ENCODE measurements at regions of chr7 and their contacts with region 1.

Region 1: GRCh38 chr7:12979181-12979580 is 291.7 kb downstream of the ARL4A start:
- DNase-seq: no peak
- ATAC-seq: no peak
- H3K4me3 ChIP-seq: no peak overlapping the region
- H3K27ac ChIP-seq: no peak overlapping the region
- H3K4me1 ChIP-seq: no peaks in the 10 kb centered on the region
- H3K27me3 ChIP-seq: no peaks in the 10 kb centered on the region
- CTCF ChIP-seq: no peak
- EP300 ChIP-seq: no peak
- POLR2A ChIP-seq: no peak
- RAD21 ChIP-seq: no peak

Region 2: GRCh38 chr7:12961910-12962480 is 17.2 kb before region 1 on chr7:
- CTCF ChIA-PET with region 1: no interaction called
- POLR2A ChIA-PET with region 1: no interaction called
- RAD21 ChIA-PET with region 1: no interaction called
- SMC1A ChIA-PET with region 1: no interaction called
- in situ Hi-C with region 1: no loop called
- intact Hi-C with region 1: no loop called
- DNase-seq: no peak
- ATAC-seq: no peak
- H3K4me3 ChIP-seq: no peak overlapping the region
- H3K27ac ChIP-seq: no peak overlapping the region
- H3K4me1 ChIP-seq: no peaks in the 10 kb centered on the region
- H3K27me3 ChIP-seq: no peaks in the 10 kb centered on the region; a peak in 1 of 4 replicates
- CTCF ChIP-seq: no peak
- EP300 ChIP-seq: no peak
- POLR2A ChIP-seq: no peak
- RAD21 ChIP-seq: no peak

Region 3: DNA sequence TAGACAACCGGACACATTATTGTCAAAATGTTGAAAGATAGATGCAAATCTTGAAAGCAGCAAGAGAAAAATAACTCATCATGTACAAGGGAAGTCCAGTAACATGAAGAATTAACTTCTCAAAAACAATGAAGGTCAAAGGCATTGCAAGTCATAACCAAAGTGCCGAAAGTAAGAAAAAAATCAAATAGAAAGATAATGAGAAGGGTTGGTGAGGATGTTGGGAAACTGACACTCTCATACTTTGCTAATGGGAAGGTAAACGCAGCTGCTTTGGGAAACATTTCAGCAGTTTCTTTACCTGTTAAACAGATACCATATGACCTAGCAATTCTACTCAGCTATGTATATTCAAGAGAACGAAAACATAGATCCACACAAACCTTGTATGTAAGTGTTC is 11.3 kb after region 1 on chr7:
- CTCF ChIA-PET with region 1: no interaction called
- POLR2A ChIA-PET with region 1: no interaction called
- RAD21 ChIA-PET with region 1: no interaction called
- SMC1A ChIA-PET with region 1: no interaction called
- in situ Hi-C with region 1: no loop called
- intact Hi-C with region 1: loop called (anchors 1 kb)
- DNase-seq: no peak
- ATAC-seq: no peak
- H3K4me3 ChIP-seq: no peak overlapping the region
- H3K27ac ChIP-seq: no peak overlapping the region
- H3K4me1 ChIP-seq: no peaks in the 10 kb centered on the region
- H3K27me3 ChIP-seq: no peaks in the 10 kb centered on the region
- CTCF ChIP-seq: no peak
- EP300 ChIP-seq: no peak
- POLR2A ChIP-seq: no peak
- RAD21 ChIP-seq: no peak

Measured in GM12878 (cell line).